Gastrocnemius medialis (tissue), 4 donors: ENCODE measurements at regions of chr12 and their contacts with region 1.

Region 1: GRCh38 chr12:27523642-27524493 is at the start of gene PPFIBP1:
- DNase-seq: peak; percentile 96 to 99
- ATAC-seq: peak; percentile 94 to 96
- H3K4me3 ChIP-seq: peak within 1 kb of the TSS; percentile 64 to 85 (median 74)
- H3K27ac ChIP-seq: peak within 1 kb of the TSS; percentile 83 to 90 (median 87)
- H3K4me1 ChIP-seq: peaks cover 12 to 16% of the 10 kb centered on the region in 2 donors
- H3K27me3 ChIP-seq: no peaks in the 10 kb centered on the region
- CTCF ChIP-seq: peak in 2 of 5 experiments; percentile 32 to 51
- POLR2A ChIP-seq: peak; percentile 76 to 88
- total RNA-seq, gene PPFIBP1: 18.3 to 33.2 (median 27.4) TPM

Region 2: DNA sequence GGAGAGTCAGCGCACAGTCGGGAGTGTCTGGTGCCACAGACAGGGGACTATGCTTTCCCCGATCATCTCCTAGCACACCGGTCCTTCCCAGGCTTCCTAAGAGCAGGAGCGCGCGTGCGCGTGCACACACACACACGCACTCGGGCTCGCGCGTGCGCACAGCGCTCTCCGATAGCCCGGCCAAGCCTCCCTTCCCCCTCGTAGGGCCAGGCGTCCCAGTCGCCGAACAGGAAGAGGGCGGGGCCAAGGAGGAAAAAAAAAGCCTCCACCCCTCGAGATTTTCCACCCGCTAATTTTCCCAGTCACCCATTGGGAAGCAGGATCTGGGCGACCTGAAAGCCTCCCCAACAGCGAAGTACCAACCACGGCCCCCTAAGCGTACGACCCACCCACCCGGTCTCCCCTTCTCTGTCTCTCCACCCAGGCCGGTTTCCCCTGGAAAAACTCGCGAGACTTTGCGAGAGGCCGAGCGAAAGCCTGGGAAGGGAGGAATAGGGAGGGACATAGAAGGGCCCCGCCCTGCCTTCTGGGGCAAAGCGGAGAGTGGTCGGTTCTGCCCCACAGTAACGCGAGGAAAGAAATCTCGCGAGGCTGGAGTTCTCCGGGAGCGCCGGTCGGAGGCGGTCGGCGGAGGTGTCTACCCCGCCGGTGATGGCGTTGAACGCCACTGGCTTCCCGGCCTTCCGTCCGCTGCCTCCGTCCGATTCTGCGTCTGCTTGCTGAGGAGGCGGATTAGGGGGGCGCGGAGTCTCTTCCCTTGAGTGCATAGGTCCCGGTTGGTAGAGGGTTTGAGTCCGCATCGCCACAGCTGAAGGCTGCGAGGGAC is 585.8 kb before region 1 on chr12 and contains the starts of genes FGFR1OP2 and INTS13:
- in situ Hi-C with region 1: no loop called
- intact Hi-C with region 1: loop called (anchors 10 kb)
- DNase-seq: peak; percentile 98
- ATAC-seq: peak; percentile 94
- H3K4me3 ChIP-seq: peak within 1 kb of the TSS; percentile 68 to 99 (median 90)
- H3K27ac ChIP-seq: peak within 1 kb of the TSS; percentile 94 to 97 (median 96)
- H3K4me1 ChIP-seq: peaks cover 57 to 69% of the 10 kb centered on the region in 2 donors
- H3K27me3 ChIP-seq: no peaks in the 10 kb centered on the region
- CTCF ChIP-seq: no peak
- POLR2A ChIP-seq: peak; percentile 95 to 96
- total RNA-seq, gene FGFR1OP2: 43.8 to 56.4 (median 45.9) TPM
- total RNA-seq, gene INTS13: 21.3 to 39.9 (median 32.7) TPM

Region 3: DNA sequence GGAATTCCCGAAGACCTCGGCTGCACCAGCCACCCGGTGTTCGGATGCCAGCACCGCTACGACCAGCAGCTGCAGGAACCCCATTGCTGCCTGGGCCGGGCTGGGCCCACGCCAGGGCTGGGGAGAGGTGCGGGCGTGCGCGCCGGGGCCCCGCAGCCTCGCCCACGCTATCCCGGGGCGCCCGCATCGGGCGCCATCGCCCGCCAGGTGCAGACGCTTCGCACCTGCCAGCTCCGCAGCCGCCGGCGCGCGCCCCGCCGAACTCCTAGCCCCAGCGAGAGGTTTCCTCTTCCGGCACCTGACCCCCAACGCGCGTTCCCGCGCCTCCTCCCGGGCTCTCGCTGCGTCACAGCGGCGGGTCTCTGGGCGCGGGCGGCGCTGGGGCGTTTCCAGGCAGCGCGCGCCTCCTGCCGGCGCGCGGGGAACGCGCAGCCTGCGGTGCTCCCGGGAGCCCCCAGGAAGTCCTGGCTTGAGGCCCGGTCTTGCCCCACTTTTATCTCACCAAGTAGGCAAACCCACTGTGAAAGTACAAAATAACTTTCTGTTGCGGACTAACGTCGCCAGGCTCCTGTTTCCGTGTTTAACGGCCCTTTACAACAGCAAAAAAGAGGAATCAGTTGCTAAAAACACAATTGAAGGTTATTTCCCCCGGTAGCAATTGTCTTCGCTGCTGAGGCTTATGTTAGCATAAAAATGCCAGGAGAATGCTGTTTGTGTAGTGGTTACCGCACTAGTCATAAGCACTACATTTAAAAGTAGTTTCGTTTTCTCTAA is 509.6 kb before region 1 on chr12 and contains the start of gene TM7SF3:
- in situ Hi-C with region 1: no loop called
- intact Hi-C with region 1: loop called (anchors 10 kb)
- DNase-seq: peak; percentile 86 to 92
- ATAC-seq: peak; percentile 91 to 94
- H3K4me3 ChIP-seq: peak within 1 kb of the TSS; percentile 76 to 98 (median 89)
- H3K27ac ChIP-seq: peak within 1 kb of the TSS; percentile 85 to 95 (median 92)
- H3K4me1 ChIP-seq: peaks cover 16 to 26% of the 10 kb centered on the region in 2 donors
- H3K27me3 ChIP-seq: no peaks in the 10 kb centered on the region
- CTCF ChIP-seq: peak; percentile 79 to 99 (median 96)
- POLR2A ChIP-seq: peak; percentile 57 to 61
- total RNA-seq, gene TM7SF3: 8.6 to 19.8 (median 14.3) TPM

Region 4: GRCh38 chr12:27303139-27304111 is 220.4 kb before region 1 on chr12:
- in situ Hi-C with region 1: no loop called
- intact Hi-C with region 1: no loop called
- DNase-seq: no peak
- ATAC-seq: no peak
- H3K4me3 ChIP-seq: no peak overlapping the region
- H3K27ac ChIP-seq: no peak overlapping the region
- H3K4me1 ChIP-seq: peaks cover 0 to 4% of the 10 kb centered on the region in 2 donors
- H3K27me3 ChIP-seq: no peaks in the 10 kb centered on the region
- CTCF ChIP-seq: no peak
- POLR2A ChIP-seq: no peak

Region 5: DNA sequence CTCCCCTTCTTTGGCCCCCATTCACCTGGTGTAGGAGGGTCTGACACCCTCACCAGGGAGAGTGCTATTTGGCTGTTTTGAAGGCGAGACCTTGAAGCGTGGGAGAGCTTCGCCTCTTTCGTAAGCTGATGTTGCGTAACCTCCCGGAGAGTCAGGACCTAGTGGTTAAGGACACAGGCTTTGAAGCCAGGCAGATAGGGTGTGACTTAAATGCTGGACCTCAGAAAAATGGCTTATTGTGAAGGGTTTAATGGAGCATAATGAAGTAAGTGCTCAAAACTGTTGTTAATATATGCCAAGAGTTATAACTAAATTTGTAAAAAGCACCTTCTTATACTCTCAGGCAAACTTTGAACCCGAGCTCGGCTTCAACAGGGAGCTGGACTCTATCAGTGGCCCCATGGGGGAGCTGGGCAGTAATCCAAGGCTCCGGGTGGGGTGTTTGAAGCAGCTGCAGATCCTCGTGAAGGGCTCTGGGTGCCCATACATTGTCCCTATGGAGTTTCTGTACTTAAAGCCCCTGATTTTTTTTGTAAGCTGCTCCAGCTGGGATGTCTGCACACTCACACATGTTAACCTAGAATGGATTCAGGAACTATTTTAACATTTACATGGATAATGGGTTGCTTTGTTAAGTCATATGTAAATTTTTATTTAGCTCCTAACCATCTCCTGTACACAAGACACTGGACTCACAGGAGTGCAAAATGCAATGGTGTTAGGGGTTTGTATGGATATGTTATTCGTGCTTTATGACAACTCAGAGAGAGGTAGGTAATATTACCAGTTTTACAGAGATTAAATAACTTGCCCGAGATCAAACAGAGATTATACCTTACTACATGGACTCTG is 26.2 kb after region 1 on chr12:
- in situ Hi-C with region 1: no loop called
- intact Hi-C with region 1: loop called (anchors 2 kb)
- DNase-seq: peak; percentile 86 to 90
- ATAC-seq: peak; percentile 92 to 93
- H3K4me3 ChIP-seq: peak overlapping the region in 3 of 4 donors; percentile 1 to 48 (median 32)
- H3K27ac ChIP-seq: peak overlapping the region; percentile 68 to 86 (median 74)
- H3K4me1 ChIP-seq: peaks cover 76 to 80% of the 10 kb centered on the region in 2 donors
- H3K27me3 ChIP-seq: no peaks in the 10 kb centered on the region
- CTCF ChIP-seq: no peak
- POLR2A ChIP-seq: no peak

Region 6: GRCh38 chr12:27635349-27635972 is 111.6 kb after region 1 on chr12:
- in situ Hi-C with region 1: no loop called
- intact Hi-C with region 1: loop called (anchors 5 kb)
- DNase-seq: no peak
- ATAC-seq: peak in 1 of 2 donors; percentile 49
- H3K4me3 ChIP-seq: no peak overlapping the region
- H3K27ac ChIP-seq: no peak overlapping the region
- H3K4me1 ChIP-seq: no peaks in the 10 kb centered on the region
- H3K27me3 ChIP-seq: no peaks in the 10 kb centered on the region
- CTCF ChIP-seq: peak; percentile 43 to 63 (median 55)
- POLR2A ChIP-seq: no peak

Region 7: GRCh38 chr12:27652174-27652763 is 128.4 kb after region 1 on chr12:
- in situ Hi-C with region 1: no loop called
- intact Hi-C with region 1: loop called (anchors 5 kb)
- DNase-seq: peak in 1 of 2 donors; percentile 41
- ATAC-seq: peak; percentile 75 to 92
- H3K4me3 ChIP-seq: no peak overlapping the region
- H3K27ac ChIP-seq: no peak overlapping the region
- H3K4me1 ChIP-seq: no peaks in the 10 kb centered on the region
- H3K27me3 ChIP-seq: no peaks in the 10 kb centered on the region
- CTCF ChIP-seq: peak; percentile 69 to 89 (median 70)
- POLR2A ChIP-seq: no peak